ENCODE measurements at regions of chr4 and their contacts with region 1.

Region 1: GRCh38 chr4:112648263-112649054 is 11.5 kb downstream of the LARP7 start:
- DNase-seq: peak in 1 of 2 experiments; percentile 74
- H3K4me3 ChIP-seq: peak overlapping the region; percentile 75 to 100 (median 100)
- H3K27ac ChIP-seq: peak overlapping the region; percentile 92
- H3K4me1 ChIP-seq: peaks cover 0 to 10% (median 1%) of the 10 kb centered on the region in 4 experiments; a peak in 2 of 7 replicates
- H3K27me3 ChIP-seq: no peaks in the 10 kb centered on the region
- CTCF ChIP-seq: no peak
- EP300 ChIP-seq: peak in 1 of 2 experiments; percentile 64; a peak in 1 of 3 replicates
- POLR2A ChIP-seq: peak; percentile 95 to 98
- RAD21 ChIP-seq: no peak

Region 2: DNA sequence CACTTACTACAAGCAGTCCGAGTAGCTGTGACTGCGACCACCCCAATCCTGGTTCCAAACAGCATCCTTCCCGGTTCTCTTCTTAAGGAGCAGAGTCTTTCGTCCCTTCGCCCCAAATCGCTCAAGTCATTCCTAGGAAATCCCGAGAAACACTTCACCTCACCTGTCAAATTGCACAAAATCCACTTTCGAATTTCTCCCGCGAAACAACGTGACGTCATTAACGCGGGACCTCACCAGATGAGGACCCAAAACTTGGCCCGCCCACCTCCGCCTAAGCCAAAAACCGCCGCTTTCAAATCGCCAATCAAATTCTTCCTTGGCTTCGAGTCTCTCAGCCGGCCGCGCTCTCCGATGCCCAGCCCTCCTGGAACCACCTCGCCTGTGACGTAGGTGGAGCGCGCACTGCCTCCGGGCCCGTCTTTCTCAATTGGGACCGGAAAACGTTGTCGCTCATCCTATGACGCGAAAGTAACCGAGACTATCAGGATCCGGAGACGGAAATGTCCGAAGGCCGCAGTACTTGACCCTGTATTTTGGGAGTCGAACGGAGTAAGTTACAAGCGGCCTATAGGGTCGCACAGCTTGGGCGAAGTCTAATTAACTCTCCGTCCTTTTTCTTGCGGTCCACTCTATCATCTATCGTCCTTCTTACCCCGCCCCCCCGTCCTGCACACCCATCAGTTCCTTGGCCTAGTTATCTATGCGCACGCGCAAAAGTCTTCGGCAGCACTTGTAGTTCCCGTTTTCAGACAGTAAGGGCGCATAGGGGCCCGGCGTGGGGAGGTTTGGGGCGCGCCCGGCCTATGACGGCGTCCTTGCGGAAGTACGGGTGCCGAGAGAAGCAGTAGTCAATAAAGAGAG is 11.5 kb before region 1 on chr4 and contains the starts of genes LARP7 and ZGRF1:
- CTCF ChIA-PET with region 1: interaction called, 5 read pairs
- POLR2A ChIA-PET with region 1: interaction called, 54 read pairs
- DNase-seq: peak; percentile 96 to 97
- H3K4me3 ChIP-seq: peak within 1 kb of the TSS; percentile 86 to 98 (median 96)
- H3K27ac ChIP-seq: peak within 1 kb of the TSS; percentile 95
- H3K4me1 ChIP-seq: peaks cover 0 to 9% (median 1%) of the 10 kb centered on the region in 4 experiments; a peak in 2 of 7 replicates
- H3K27me3 ChIP-seq: no peaks in the 10 kb centered on the region
- CTCF ChIP-seq: peak; percentile 66 to 83 (median 72)
- EP300 ChIP-seq: peak in 1 of 2 experiments; percentile 52; a peak in 1 of 3 replicates
- POLR2A ChIP-seq: peak in 1 of 2 experiments; percentile 67; a peak in 2 of 3 replicates
- RAD21 ChIP-seq: peak; percentile 66 to 67
- total RNA-seq, gene LARP7: 38.3 and 40.1 TPM in 2 replicates
- total RNA-seq, gene ZGRF1: 43.7 and 44.6 TPM in 2 replicates

Region 3: GRCh38 chr4:112674376-112674775 is 25.9 kb after region 1 on chr4:
- CTCF ChIA-PET with region 1: no interaction called
- POLR2A ChIA-PET with region 1: interaction called, 16 read pairs
- DNase-seq: no peak
- H3K4me3 ChIP-seq: no peak overlapping the region
- H3K27ac ChIP-seq: no peak overlapping the region
- H3K4me1 ChIP-seq: no peaks in the 10 kb centered on the region
- H3K27me3 ChIP-seq: no peaks in the 10 kb centered on the region
- CTCF ChIP-seq: no peak
- EP300 ChIP-seq: no peak
- POLR2A ChIP-seq: no peak
- RAD21 ChIP-seq: no peak

Region 4: GRCh38 chr4:112693507-112693906 is 45.0 kb after region 1 on chr4:
- CTCF ChIA-PET with region 1: interaction called, 3 read pairs
- POLR2A ChIA-PET with region 1: interaction called, 13 read pairs
- DNase-seq: peak in 1 of 2 experiments; percentile 34
- H3K4me3 ChIP-seq: no peak overlapping the region
- H3K27ac ChIP-seq: no peak overlapping the region
- H3K4me1 ChIP-seq: no peaks in the 10 kb centered on the region; a peak in 1 of 7 replicates
- H3K27me3 ChIP-seq: no peaks in the 10 kb centered on the region
- CTCF ChIP-seq: no peak
- EP300 ChIP-seq: no peak
- POLR2A ChIP-seq: no peak
- RAD21 ChIP-seq: no peak

Region 5: DNA sequence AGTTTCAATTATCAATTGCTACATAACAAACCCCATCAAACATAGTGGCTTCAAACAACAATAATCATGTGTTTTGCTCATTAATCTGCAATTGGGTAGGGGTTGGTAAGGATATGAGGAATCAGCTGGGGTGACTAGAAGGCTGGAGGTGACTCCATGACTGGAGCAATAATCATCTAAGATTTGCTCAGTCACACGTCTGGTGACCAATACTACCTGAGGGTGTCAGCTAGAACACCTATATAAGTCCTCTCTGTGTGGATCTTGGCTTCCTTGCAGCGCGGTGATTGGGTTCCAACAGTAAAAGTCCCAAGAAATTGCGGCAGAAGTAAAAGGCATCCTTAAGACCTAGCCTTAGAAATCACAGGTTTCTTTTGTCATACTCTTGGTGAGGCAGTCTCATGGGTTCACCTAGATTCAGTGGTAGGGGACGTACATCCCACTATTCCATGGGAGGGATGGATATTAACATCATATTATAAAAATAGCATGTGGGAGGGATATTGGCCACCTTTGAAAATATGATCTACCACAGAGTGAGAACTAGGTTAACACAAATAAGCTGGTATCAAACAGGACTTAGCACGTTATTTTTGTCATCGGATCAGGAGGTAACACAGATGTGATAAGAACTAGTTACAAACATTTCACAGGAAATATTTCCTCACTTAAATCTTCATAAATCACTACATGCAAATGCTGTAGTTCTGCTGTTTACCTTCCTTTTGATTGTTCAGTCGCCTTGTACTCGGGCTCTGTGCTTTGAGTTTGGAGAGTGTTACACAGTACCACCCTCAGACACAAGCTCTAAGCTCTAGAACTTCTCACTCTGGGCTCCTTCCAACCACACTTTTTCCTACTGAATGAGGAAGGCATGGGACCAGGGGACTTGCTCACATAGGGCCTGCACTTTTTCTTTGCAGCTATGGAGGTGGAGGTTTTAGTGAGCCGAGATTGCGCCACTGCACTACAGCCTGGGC is 66.8 kb after region 1 on chr4:
- CTCF ChIA-PET with region 1: interaction called, 3 read pairs
- POLR2A ChIA-PET with region 1: interaction called, 222 read pairs
- DNase-seq: peak in 1 of 2 experiments; percentile 31
- H3K4me3 ChIP-seq: no peak overlapping the region
- H3K27ac ChIP-seq: no peak overlapping the region; the same call in 1 of the 2 replicates
- H3K4me1 ChIP-seq: no peaks in the 10 kb centered on the region
- H3K27me3 ChIP-seq: no peaks in the 10 kb centered on the region
- CTCF ChIP-seq: no peak
- EP300 ChIP-seq: no peak
- POLR2A ChIP-seq: no peak
- RAD21 ChIP-seq: no peak

Region 6: GRCh38 chr4:112735474-112735951 is 87.1 kb after region 1 on chr4:
- CTCF ChIA-PET with region 1: interaction called, 6 read pairs
- POLR2A ChIA-PET with region 1: interaction called, 306 read pairs
- DNase-seq: no peak
- H3K4me3 ChIP-seq: no peak overlapping the region
- H3K27ac ChIP-seq: no peak overlapping the region
- H3K4me1 ChIP-seq: peaks cover 0 to 6% (median 2%) of the 10 kb centered on the region in 4 experiments; a peak in 4 of 7 replicates
- H3K27me3 ChIP-seq: no peaks in the 10 kb centered on the region
- CTCF ChIP-seq: no peak
- EP300 ChIP-seq: no peak
- POLR2A ChIP-seq: no peak
- RAD21 ChIP-seq: peak in 1 of 2 experiments; percentile 8; a peak in 1 of 4 replicates

Region 7: DNA sequence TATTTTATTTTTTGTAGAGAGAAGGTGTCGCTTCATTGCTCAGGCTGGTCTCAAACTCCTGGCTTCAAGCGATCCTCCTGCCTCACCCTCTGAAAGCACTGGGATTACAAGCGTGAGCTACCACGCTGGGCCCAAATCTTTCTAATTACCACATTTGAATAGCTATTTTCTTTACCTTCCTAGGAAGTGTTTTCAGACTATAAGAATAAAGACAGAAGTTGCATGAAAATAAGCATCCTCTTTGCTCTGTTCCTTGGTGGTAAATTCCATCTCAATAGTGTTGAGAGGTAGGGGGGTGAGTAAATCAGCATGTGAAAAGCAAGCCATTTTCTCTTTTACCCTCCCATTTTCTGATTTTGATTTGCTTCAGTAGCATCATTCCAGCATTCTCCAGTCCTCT is 110.9 kb after region 1 on chr4:
- CTCF ChIA-PET with region 1: interaction called, 73 read pairs
- POLR2A ChIA-PET with region 1: interaction called, 612 read pairs
- DNase-seq: peak in 1 of 2 experiments; percentile 65
- H3K4me3 ChIP-seq: peak overlapping the region in 1 of 4 experiments; percentile 35; a peak in 1 of 8 replicates
- H3K27ac ChIP-seq: peak overlapping the region; percentile 78; the same call in 1 of the 2 replicates
- H3K4me1 ChIP-seq: peaks cover 0 to 7% (median 5%) of the 10 kb centered on the region in 4 experiments; a peak in 4 of 7 replicates
- H3K27me3 ChIP-seq: no peaks in the 10 kb centered on the region
- CTCF ChIP-seq: no peak
- EP300 ChIP-seq: peak in 1 of 2 experiments; percentile 79; a peak in 1 of 3 replicates
- POLR2A ChIP-seq: no peak; a peak in 1 of 3 replicates
- RAD21 ChIP-seq: no peak; a peak in 1 of 4 replicates